Ascending aorta (tissue), 2 donors: ENCODE measurements at regions of chr10 and their contacts with region 1.

Region 1: DNA sequence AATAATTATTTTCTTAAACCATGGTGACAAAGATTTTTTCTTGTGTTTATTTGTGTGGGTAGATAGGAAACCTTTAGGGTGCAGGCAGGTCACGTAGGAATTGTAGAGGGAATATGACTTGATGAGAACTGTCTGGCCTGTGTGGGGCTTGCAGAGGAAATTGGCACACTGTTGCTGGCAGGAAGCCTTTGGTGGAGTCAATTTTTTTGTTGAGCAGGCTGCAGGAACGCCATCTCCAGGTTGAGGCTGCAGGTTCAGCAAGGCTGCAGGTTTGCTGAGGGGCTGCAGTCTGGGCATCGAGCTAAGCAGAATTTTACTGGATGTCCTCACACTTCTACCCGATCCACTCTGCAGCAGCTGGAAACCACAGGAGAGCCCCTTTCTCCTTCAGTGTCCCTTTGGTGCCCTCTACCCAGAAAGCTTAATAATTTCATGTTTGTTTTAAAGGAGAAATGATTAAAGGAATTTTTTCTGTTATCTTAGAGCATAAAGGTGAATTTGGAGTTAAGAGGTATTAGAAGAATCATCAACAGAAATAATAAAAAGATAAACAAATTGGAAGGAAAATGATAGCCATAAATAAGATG is 37.0 kb downstream of the TBC1D12 start:
- DNase-seq: no peak
- H3K4me3 ChIP-seq: no peak overlapping the region
- H3K27ac ChIP-seq: no peak overlapping the region
- H3K4me1 ChIP-seq: peaks cover 0 to 3% of the 10 kb centered on the region in 2 donors
- H3K27me3 ChIP-seq: no peaks in the 10 kb centered on the region
- CTCF ChIP-seq: peak in 1 of 3 experiments; percentile 17

Region 2: GRCh38 chr10:93916257-93917063 is 522.9 kb before region 1 on chr10:
- intact Hi-C with region 1: loop called (anchors 5 kb)
- DNase-seq: no peak
- H3K4me3 ChIP-seq: peak overlapping the region; percentile 11 to 18
- H3K27ac ChIP-seq: no peak overlapping the region
- H3K4me1 ChIP-seq: no peaks in the 10 kb centered on the region
- H3K27me3 ChIP-seq: no peaks in the 10 kb centered on the region
- CTCF ChIP-seq: peak; percentile 20 to 59 (median 53)

Region 3: DNA sequence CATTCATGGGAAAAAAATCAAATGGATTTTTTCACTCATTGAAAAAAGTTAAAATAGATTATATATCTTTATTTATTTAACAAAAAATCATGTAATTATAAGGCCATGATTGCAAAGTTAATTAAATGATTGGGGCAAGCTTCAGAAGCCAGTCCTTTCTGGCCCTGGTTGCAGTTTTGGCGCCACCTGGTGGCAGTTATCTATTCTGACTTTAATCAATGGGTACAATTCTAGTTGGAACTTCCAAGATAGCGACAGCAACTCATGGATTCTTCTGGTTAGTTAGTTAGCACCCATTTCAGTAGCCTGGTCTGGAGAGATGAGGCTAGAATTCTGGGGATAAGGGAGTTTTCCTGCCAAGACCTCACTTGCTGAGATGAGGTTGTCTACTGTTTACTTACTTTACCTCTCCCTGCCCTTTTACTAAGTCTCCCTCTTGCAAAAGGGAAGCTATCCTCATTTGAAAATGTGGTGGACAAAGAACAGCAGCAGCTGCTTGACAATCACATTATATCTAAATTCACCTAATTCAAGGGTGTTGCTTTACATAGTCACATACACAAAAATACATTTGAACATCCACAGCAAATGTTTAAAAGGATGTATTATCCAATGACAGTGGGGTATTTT is 119.0 kb before region 1 on chr10:
- intact Hi-C with region 1: no loop called
- DNase-seq: peak in 1 of 2 donors; percentile 76
- H3K4me3 ChIP-seq: no peak overlapping the region
- H3K27ac ChIP-seq: no peak overlapping the region
- H3K4me1 ChIP-seq: peaks cover 0 to 7% of the 10 kb centered on the region in 2 donors
- H3K27me3 ChIP-seq: no peaks in the 10 kb centered on the region
- CTCF ChIP-seq: peak; percentile 58 to 90 (median 86)

Region 4: DNA sequence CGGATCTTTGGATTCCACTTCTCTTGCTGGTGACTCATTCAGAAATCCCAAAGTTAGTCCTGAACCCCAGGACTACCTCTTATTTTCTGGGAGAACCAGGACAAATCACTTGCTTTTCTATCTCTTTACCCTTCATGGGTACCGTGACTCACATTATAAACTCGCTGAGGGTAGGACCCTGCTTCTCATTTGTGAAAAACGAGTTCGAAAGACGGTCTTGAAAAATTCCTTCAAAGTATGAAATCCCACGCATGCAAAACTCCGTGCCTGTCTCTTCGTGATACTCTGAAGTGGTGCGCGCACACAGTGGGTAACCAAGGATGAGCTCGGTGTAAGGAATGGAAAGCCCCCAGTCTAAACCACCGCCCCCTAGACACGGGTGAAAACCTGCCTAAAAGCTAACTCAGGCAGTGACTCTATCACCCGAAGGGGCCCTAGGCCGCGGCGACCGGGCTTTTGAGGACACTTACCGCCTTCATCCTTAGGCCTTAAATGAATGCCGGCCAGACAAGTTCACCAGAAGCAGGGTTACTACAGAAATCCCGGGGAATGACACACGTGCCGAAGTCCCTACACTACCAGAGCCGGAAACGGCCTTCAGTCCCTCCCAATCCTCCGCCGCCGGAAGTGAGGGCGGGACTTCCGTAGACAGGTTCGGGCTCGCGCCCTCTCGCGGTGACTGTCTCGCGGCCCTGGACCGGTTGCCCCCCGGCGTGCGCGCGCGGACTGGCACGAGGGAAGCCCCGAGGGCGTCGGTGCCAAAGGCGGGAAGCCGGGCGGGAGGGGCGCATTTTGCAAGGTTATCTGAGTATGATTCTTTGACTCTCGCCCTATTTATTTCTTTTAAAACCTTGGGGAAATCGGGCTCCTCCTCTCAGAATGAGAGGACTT is 76.8 kb before region 1 on chr10 and contains the start of gene NOC3L:
- intact Hi-C with region 1: loop called (anchors 2 kb)
- DNase-seq: peak; percentile 70 to 98
- H3K4me3 ChIP-seq: peak within 1 kb of the TSS; percentile 55 to 72
- H3K27ac ChIP-seq: peak within 1 kb of the TSS; percentile 35 to 69
- H3K4me1 ChIP-seq: peaks cover 3 to 11% of the 10 kb centered on the region in 2 donors
- H3K27me3 ChIP-seq: no peaks in the 10 kb centered on the region
- CTCF ChIP-seq: peak; percentile 73 to 94 (median 88)
- total RNA-seq, gene NOC3L: 7.9 TPM

Region 5: DNA sequence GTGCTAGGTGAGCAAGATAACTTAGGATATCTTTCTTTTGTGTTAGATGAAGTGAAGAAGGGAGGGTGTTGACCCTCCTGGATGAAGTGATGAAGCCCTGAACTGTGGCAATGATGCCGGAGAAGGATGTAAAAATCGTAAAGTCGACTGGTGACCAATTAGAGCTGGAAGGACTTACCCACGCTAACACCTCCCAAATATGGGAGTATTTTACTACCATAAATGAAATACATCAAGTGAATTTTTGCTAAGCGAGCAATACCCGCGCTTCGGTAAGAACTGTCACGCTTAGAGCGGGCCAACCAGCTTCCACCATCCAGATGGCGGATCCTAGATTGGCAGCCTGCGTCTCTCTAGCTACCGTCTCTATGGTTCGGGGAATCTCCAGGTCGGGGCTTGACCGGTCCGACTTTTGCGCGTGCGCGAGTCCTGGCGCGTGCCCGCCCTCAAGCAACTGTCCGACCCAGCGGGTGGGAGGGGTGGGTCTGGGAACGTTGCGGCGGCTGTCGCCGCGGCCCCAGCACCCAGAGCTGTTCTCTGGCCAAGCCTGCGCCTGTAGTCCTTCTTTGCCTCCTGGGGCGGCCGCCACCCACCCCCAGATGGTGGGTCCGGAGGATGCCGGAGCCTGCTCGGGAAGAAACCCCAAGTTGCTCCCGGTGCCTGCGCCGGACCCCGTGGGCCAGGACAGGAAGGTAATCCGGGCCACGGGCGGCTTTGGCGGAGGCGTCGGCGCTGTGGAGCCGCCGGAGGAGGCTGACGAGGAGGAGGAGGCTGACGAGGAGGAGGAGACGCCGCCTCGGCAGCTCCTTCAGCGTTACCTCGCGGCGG is 37.1 kb before region 1 on chr10 and contains the start of gene TBC1D12:
- intact Hi-C with region 1: loop called (anchors 2 kb)
- DNase-seq: peak; percentile 78 to 98
- H3K4me3 ChIP-seq: peak within 1 kb of the TSS; percentile 88 to 94
- H3K27ac ChIP-seq: peak within 1 kb of the TSS; percentile 91 to 95
- H3K4me1 ChIP-seq: peaks cover 0 to 6% of the 10 kb centered on the region in 2 donors
- H3K27me3 ChIP-seq: no peaks in the 10 kb centered on the region
- CTCF ChIP-seq: no peak
- total RNA-seq, gene TBC1D12: 9.4 TPM